ENCODE measurements at regions of chr6 and their contacts with region 1.

Region 1: DNA sequence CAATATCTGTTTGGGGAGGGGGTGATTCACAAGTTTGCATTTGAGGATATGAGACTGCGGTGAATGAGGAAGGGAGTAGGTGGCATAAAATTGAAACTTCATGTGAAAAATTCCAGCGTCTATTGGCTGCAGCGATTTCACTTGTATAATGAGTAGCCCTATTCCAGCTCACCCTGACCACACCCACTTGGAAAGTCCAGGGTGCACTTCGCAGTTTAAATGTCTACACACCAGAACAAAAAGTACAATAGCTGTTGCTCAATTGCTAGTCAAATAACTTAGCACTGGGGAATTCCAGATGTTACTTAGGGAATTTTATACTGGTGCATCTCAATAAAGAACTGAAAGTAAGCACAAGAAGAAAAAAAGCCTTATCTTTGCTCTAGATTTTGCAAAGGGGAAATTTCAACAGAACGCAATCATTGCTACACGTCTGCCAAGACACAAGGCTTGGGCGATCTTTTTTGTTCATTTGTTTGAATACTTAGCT is 6.3 kb downstream of the TNFAIP3 start:
- DNase-seq: peak; percentile 93
- ATAC-seq: peak; percentile 56
- H3K4me3 Mint-ChIP-seq: peak overlapping the region; percentile 91
- H3K27ac Mint-ChIP-seq: peak overlapping the region; percentile 99
- H3K4me1 Mint-ChIP-seq: peaks cover 40% of the 10 kb centered on the region
- H3K27me3 Mint-ChIP-seq: no peaks in the 10 kb centered on the region

Region 2: GRCh38 chr6:136846046-136846445 is 1027.3 kb before region 1 on chr6:
- CTCF ChIA-PET with region 1: no interaction called
- POLR2A ChIA-PET with region 1: no interaction called
- intact Hi-C with region 1: no loop called
- DNase-seq: peak; percentile 52
- ATAC-seq: peak; percentile 39
- H3K4me3 Mint-ChIP-seq: no peak overlapping the region
- H3K27ac Mint-ChIP-seq: no peak overlapping the region
- H3K4me1 Mint-ChIP-seq: no peaks in the 10 kb centered on the region
- H3K27me3 Mint-ChIP-seq: no peaks in the 10 kb centered on the region

Region 3: DNA sequence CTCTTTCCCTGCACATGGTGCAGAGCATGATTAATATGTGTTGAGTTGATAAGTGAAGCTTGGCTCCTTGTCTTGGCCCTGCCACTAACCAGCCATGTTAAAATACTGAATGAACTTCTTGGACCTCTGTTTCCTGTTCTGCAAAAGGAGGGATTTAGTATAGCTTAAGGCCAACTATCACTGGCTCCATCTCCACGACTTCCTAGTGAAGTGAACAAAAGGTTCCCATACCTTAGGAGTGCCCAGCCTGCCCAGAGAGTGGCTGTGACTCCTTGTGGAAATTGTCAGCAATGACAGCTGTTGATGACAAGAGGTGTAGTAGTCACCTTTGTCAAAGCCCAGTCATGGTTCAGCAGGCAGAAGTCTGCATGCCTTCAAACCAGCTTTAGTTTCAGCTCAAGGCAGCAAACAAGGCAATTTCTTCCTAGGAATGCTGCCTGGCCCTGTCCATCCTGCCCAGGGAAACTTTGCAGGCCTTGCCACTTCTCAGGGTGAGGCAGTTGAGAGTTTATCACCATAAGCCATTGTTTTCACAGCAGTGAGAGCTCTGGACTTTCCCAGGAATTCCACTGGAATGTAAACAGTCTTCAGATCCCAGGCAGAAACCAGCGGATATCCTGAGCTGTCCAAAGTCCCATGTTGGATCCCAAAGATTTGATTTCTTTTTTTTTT is 175.9 kb before region 1 on chr6:
- CTCF ChIA-PET with region 1: interaction called, 19 read pairs
- POLR2A ChIA-PET with region 1: interaction called, 12 read pairs
- intact Hi-C with region 1: no loop called
- DNase-seq: peak; percentile 46
- ATAC-seq: peak; percentile 43
- H3K4me3 Mint-ChIP-seq: no peak overlapping the region
- H3K27ac Mint-ChIP-seq: peak overlapping the region; percentile 60
- H3K4me1 Mint-ChIP-seq: peaks cover 47% of the 10 kb centered on the region
- H3K27me3 Mint-ChIP-seq: peaks cover 7% of the 10 kb centered on the region

Region 4: GRCh38 chr6:137811121-137811915 is 62.0 kb before region 1 on chr6:
- CTCF ChIA-PET with region 1: interaction called, 15 read pairs
- POLR2A ChIA-PET with region 1: no interaction called
- intact Hi-C with region 1: no loop called
- DNase-seq: peak; percentile 91
- ATAC-seq: peak; percentile 93
- H3K4me3 Mint-ChIP-seq: peak overlapping the region; percentile 55
- H3K27ac Mint-ChIP-seq: peak overlapping the region; percentile 83
- H3K4me1 Mint-ChIP-seq: peaks cover 79% of the 10 kb centered on the region
- H3K27me3 Mint-ChIP-seq: no peaks in the 10 kb centered on the region

Region 5: GRCh38 chr6:137903933-137904821 is 30.9 kb after region 1 on chr6:
- CTCF ChIA-PET with region 1: interaction called, 4 read pairs
- POLR2A ChIA-PET with region 1: interaction called, 6 read pairs
- intact Hi-C with region 1: loop called (anchors 1 kb)
- DNase-seq: peak; percentile 75
- ATAC-seq: peak; percentile 85
- H3K4me3 Mint-ChIP-seq: peak overlapping the region; percentile 69
- H3K27ac Mint-ChIP-seq: peak overlapping the region; percentile 98
- H3K4me1 Mint-ChIP-seq: peaks cover 62% of the 10 kb centered on the region
- H3K27me3 Mint-ChIP-seq: no peaks in the 10 kb centered on the region

Region 6: DNA sequence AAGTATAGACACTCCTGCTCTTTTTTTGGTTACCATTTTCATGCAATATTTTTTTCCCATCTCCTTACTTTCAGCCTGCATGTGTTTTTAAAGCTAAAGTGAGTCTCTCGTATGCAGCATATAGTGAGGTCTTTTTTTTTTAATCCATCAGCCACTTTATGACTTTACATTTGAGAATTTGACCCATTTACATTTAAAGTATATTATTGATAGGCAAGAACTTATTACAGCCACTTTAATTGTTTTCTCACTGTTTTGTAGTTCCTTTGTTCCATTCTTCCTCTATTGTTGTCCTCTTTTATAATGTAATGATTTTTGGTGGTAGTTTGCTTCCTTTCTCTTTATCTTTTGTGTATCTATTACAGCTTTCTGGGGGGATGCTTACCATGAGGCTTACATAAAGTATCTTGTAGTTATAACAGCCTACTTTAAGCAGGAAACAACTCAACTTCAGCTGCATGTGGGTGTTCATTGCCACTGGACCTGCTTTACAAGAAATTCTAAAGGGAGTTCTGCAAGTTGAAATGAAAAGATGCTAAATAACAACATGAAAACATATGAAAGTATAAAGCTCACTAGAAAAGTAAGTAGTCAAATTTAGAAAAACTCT is 65.6 kb after region 1 on chr6:
- CTCF ChIA-PET with region 1: interaction called, 47 read pairs
- POLR2A ChIA-PET with region 1: interaction called, 3 read pairs
- intact Hi-C with region 1: loop called (anchors 1 kb)
- DNase-seq: no peak
- ATAC-seq: no peak
- H3K4me3 Mint-ChIP-seq: no peak overlapping the region
- H3K27ac Mint-ChIP-seq: peak overlapping the region; percentile 56
- H3K4me1 Mint-ChIP-seq: peaks cover 43% of the 10 kb centered on the region
- H3K27me3 Mint-ChIP-seq: no peaks in the 10 kb centered on the region

Region 7: GRCh38 chr6:138001750-138002349 is 128.5 kb after region 1 on chr6:
- CTCF ChIA-PET with region 1: interaction called, 11 read pairs
- POLR2A ChIA-PET with region 1: interaction called, 3 read pairs
- intact Hi-C with region 1: no loop called
- DNase-seq: peak; percentile 76
- ATAC-seq: peak; percentile 31
- H3K4me3 Mint-ChIP-seq: no peak overlapping the region
- H3K27ac Mint-ChIP-seq: no peak overlapping the region
- H3K4me1 Mint-ChIP-seq: peaks cover 20% of the 10 kb centered on the region
- H3K27me3 Mint-ChIP-seq: peaks cover 3% of the 10 kb centered on the region

Region 8: DNA sequence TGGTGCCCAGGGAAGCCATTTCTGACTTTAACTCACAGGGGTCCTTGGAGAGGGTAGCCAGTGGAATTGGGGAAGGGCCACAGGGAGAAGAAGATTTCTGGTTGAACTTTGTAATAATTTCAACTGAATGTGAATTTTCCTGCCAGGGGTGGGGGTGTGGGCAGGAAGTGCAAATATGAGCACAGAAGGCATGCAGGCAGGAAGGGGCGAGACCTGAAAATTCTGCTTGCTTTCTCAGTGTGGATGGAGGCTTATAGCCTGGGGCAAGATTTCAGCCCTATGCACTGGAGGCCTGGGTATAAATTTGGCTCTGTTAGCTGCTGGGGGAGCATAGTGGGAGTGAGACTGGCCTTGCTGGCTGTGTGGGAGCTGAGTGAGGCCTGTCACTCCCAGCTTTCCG is 179.4 kb after region 1 on chr6:
- CTCF ChIA-PET with region 1: no interaction called
- POLR2A ChIA-PET with region 1: no interaction called
- intact Hi-C with region 1: no loop called
- DNase-seq: no peak
- ATAC-seq: no peak
- H3K4me3 Mint-ChIP-seq: no peak overlapping the region
- H3K27ac Mint-ChIP-seq: no peak overlapping the region
- H3K4me1 Mint-ChIP-seq: no peaks in the 10 kb centered on the region
- H3K27me3 Mint-ChIP-seq: peaks cover 34% of the 10 kb centered on the region

Region 9: GRCh38 chr6:138310821-138311220 is 437.5 kb after region 1 on chr6:
- CTCF ChIA-PET with region 1: no interaction called
- POLR2A ChIA-PET with region 1: no interaction called
- intact Hi-C with region 1: no loop called
- DNase-seq: no peak
- ATAC-seq: no peak
- H3K4me3 Mint-ChIP-seq: no peak overlapping the region
- H3K27ac Mint-ChIP-seq: no peak overlapping the region
- H3K4me1 Mint-ChIP-seq: no peaks in the 10 kb centered on the region
- H3K27me3 Mint-ChIP-seq: peaks cover 4% of the 10 kb centered on the region

Measured in activated CD4-positive, alpha-beta T cell treated with anti-CD3 and anti-CD28 coated beads for 36 hours (primary cell).